Dendritic cell treated with granulocyte-macrophage colony-stimulating factor and Interleukin-4, amounts not matched to agents 40 ng/mL and 50 ng/mL, for 4 days (primary cell): ENCODE measurements at regions of chr6 and their contacts with region 1.

Region 1: DNA sequence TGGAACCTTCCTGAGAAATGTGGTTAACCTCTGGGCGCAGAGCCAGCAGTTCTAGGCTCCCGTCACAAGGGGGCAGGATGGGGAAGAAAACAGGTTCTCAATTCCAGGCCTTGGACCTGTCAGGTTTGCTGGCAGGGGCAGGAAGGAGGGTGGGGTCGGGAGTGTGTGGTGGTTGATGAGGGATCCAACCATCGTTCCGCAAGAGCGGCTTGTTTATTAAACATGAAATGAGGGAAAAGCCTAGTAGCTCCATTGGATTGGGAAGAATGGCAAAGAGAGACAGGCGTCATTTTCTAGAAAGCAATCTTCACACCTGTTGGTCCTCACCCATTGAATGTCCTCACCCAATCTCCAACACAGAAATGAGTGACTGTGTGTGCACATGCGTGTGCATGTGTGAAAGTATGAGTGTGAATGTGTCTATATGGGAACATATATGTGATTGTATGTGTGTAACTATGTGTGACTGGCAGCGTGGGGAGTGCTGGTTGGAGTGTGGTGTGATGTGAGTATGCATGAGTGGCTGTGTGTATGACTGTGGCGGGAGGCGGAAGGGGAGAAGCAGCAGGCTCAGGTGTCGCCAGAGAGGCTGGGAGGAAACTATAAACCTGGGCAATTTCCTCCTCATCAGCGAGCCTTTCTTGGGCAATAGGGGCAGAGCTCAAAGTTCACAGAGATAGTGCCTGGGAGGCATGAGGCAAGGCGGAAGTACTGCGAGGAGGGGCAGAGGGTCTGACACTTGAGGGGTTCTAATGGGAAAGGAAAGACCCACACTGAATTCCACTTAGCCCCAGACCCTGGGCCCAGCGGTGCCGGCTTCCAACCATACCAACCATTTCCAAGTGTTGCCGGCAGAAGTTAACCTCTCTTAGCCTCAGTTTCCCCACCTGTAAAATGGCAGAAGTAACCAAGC is 29.6 kb downstream of the SRSF3 start:
- H3K4me3 Mint-ChIP-seq: peak overlapping the region; percentile 62
- H3K27ac Mint-ChIP-seq: peak overlapping the region; percentile 69
- H3K4me1 Mint-ChIP-seq: peaks cover 88% of the 10 kb centered on the region
- H3K27me3 Mint-ChIP-seq: peaks cover 4% of the 10 kb centered on the region

Region 2: DNA sequence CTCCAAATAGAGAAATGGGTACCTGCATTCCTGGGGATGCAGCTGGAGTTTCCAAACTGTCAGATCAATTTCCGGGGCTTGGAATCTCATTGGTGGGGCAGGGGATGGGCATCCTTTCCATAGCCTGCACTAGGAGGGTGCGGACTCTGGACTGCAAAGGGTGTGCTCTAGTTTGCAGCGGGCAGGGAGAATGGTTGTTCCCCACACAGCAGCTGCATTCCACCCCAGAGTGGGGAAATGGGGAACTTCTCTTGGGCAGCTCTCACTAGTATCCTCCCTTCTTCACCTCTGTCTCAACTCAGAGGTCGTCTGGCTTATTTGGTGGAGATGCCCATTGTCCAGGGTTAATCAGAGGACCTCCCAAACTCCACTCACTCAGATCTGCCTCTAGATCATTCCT is 20.2 kb after region 1 on chr6:
- intact Hi-C with region 1: loop called (anchors 2 kb)
- H3K4me3 Mint-ChIP-seq: peak overlapping the region; percentile 50
- H3K27ac Mint-ChIP-seq: peak overlapping the region; percentile 83
- H3K4me1 Mint-ChIP-seq: peaks cover 56% of the 10 kb centered on the region
- H3K27me3 Mint-ChIP-seq: no peaks in the 10 kb centered on the region

Region 3: GRCh38 chr6:36650848-36651478 is 27.2 kb after region 1 on chr6:
- intact Hi-C with region 1: loop called (anchors 2 kb)
- H3K4me3 Mint-ChIP-seq: peak overlapping the region; percentile 30
- H3K27ac Mint-ChIP-seq: peak overlapping the region; percentile 86
- H3K4me1 Mint-ChIP-seq: peaks cover 54% of the 10 kb centered on the region
- H3K27me3 Mint-ChIP-seq: no peaks in the 10 kb centered on the region

Region 4: DNA sequence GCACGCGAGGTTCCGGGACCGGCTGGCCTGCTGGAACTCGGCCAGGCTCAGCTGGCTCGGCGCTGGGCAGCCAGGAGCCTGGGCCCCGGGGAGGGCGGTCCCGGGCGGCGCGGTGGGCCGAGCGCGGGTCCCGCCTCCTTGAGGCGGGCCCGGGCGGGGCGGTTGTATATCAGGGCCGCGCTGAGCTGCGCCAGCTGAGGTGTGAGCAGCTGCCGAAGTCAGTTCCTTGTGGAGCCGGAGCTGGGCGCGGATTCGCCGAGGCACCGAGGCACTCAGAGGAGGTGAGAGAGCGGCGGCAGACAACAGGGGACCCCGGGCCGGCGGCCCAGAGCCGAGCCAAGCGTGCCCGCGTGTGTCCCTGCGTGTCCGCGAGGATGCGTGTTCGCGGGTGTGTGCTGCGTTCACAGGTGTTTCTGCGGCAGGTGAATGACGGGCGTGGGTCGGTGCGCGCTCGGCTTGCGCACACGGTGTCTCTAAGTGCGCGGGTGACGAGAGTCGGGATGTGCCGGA is 54.8 kb after region 1 on chr6 and contains the start of gene CDKN1A:
- intact Hi-C with region 1: loop called (anchors 1 kb)
- H3K4me3 Mint-ChIP-seq: peak within 1 kb of the TSS; percentile 99
- H3K27ac Mint-ChIP-seq: peak within 1 kb of the TSS; percentile 99
- H3K4me1 Mint-ChIP-seq: peaks cover 71% of the 10 kb centered on the region
- H3K27me3 Mint-ChIP-seq: no peaks in the 10 kb centered on the region

Region 5: GRCh38 chr6:36759148-36759759 is 135.5 kb after region 1 on chr6:
- intact Hi-C with region 1: loop called (anchors 2 kb)
- H3K4me3 Mint-ChIP-seq: no peak overlapping the region
- H3K27ac Mint-ChIP-seq: no peak overlapping the region
- H3K4me1 Mint-ChIP-seq: peaks cover 49% of the 10 kb centered on the region
- H3K27me3 Mint-ChIP-seq: peaks cover 8% of the 10 kb centered on the region